ENCODE measurements at regions of chr1 and their contacts with region 1.

Region 1: GRCh38 chr1:149962123-149962548 is 25.5 kb upstream of the MTMR11 start:
- DNase-seq: peak; percentile 57
- ATAC-seq: peak; percentile 84
- H3K4me3 Mint-ChIP-seq: no peak overlapping the region
- H3K27ac Mint-ChIP-seq: no peak overlapping the region
- H3K4me1 Mint-ChIP-seq: peaks cover 9% of the 10 kb centered on the region
- H3K27me3 Mint-ChIP-seq: no peaks in the 10 kb centered on the region
- CTCF ChIP-seq: peak; percentile 90

Region 2: GRCh38 chr1:149877211-149877946 is 84.8 kb before region 1 on chr1:
- CTCF ChIA-PET with region 1: no interaction called
- POLR2A ChIA-PET with region 1: no interaction called
- intact Hi-C with region 1: no loop called
- DNase-seq: no peak
- ATAC-seq: no peak
- H3K4me3 Mint-ChIP-seq: no peak overlapping the region
- H3K27ac Mint-ChIP-seq: no peak overlapping the region
- H3K4me1 Mint-ChIP-seq: peaks cover 28% of the 10 kb centered on the region
- H3K27me3 Mint-ChIP-seq: no peaks in the 10 kb centered on the region
- CTCF ChIP-seq: no peak

Region 3: GRCh38 chr1:150010393-150011115 is 48.4 kb after region 1 on chr1 and contains the start of gene OTUD7B:
- CTCF ChIA-PET with region 1: interaction called, 21 read pairs
- POLR2A ChIA-PET with region 1: no interaction called
- intact Hi-C with region 1: no loop called
- DNase-seq: peak; percentile 80
- ATAC-seq: peak; percentile 84
- H3K4me3 Mint-ChIP-seq: peak within 1 kb of the TSS; percentile 96
- H3K27ac Mint-ChIP-seq: peak within 1 kb of the TSS; percentile 94
- H3K4me1 Mint-ChIP-seq: peaks cover 39% of the 10 kb centered on the region
- H3K27me3 Mint-ChIP-seq: no peaks in the 10 kb centered on the region
- CTCF ChIP-seq: no peak
- total RNA-seq, gene OTUD7B: 16.1 to 17.3 TPM

Region 4: GRCh38 chr1:150049926-150050325 is 87.8 kb after region 1 on chr1:
- CTCF ChIA-PET with region 1: interaction called, 9 read pairs
- POLR2A ChIA-PET with region 1: no interaction called
- intact Hi-C with region 1: loop called (anchors 1 kb)
- DNase-seq: no peak
- ATAC-seq: no peak
- H3K4me3 Mint-ChIP-seq: no peak overlapping the region
- H3K27ac Mint-ChIP-seq: no peak overlapping the region
- H3K4me1 Mint-ChIP-seq: peaks cover 3% of the 10 kb centered on the region
- H3K27me3 Mint-ChIP-seq: peaks cover 5% of the 10 kb centered on the region
- CTCF ChIP-seq: no peak

Region 5: GRCh38 chr1:150162862-150163706 is 200.9 kb after region 1 on chr1:
- CTCF ChIA-PET with region 1: interaction called, 14 read pairs
- POLR2A ChIA-PET with region 1: interaction called, 3 read pairs
- intact Hi-C with region 1: loop called (anchors 5 kb)
- DNase-seq: peak; percentile 63
- ATAC-seq: peak; percentile 57
- H3K4me3 Mint-ChIP-seq: peak overlapping the region; percentile 13
- H3K27ac Mint-ChIP-seq: peak overlapping the region; percentile 25
- H3K4me1 Mint-ChIP-seq: peaks cover 46% of the 10 kb centered on the region
- H3K27me3 Mint-ChIP-seq: no peaks in the 10 kb centered on the region
- CTCF ChIP-seq: no peak

Region 6: DNA sequence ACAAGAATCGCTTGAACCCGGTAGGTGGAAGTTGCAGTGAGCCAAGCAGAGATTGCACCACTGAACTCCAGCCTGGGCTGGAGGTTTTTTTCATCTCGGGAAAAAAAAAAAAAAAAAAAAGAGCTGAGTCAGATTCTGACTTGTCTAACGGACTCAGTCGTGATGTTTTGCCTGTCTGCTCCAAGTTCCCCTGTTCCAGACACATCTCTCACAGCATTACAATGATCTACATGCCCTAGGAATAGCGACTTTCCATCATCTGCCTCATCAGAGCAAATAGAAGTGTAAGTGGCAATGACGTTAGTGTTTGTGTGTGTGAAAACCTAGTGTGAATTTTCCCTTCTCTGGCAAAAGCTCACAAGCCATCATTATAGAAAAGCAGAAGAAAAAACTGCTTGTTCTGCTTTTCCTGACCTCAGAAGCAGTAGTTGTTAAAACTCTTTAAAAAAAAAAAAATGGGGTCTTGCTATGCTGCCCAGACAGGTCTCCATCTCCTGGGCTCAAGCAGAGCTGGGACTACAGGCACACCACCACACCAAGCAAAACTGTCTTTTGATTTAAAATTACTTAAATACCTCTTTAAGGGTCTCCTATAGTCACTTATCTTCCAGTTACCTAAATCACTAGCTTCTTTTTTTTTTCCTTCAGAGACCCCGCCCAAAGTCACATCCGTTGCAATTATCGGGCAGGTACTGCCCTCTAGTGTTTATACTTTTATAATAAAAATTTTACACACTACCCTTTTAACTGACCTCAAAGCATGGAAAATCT is 224.8 kb after region 1 on chr1:
- CTCF ChIA-PET with region 1: interaction called, 19 read pairs
- POLR2A ChIA-PET with region 1: no interaction called
- intact Hi-C with region 1: no loop called
- DNase-seq: peak; percentile 34
- ATAC-seq: peak; percentile 79
- H3K4me3 Mint-ChIP-seq: peak overlapping the region; percentile 44
- H3K27ac Mint-ChIP-seq: peak overlapping the region; percentile 57
- H3K4me1 Mint-ChIP-seq: peaks cover 13% of the 10 kb centered on the region
- H3K27me3 Mint-ChIP-seq: no peaks in the 10 kb centered on the region
- CTCF ChIP-seq: peak; percentile 87

Region 7: GRCh38 chr1:150243003-150243402 is 280.9 kb after region 1 on chr1:
- CTCF ChIA-PET with region 1: no interaction called
- POLR2A ChIA-PET with region 1: no interaction called
- intact Hi-C with region 1: no loop called
- DNase-seq: no peak
- ATAC-seq: no peak
- H3K4me3 Mint-ChIP-seq: no peak overlapping the region
- H3K27ac Mint-ChIP-seq: no peak overlapping the region
- H3K4me1 Mint-ChIP-seq: no peaks in the 10 kb centered on the region
- H3K27me3 Mint-ChIP-seq: peaks cover 2% of the 10 kb centered on the region
- CTCF ChIP-seq: no peak

Measured in activated CD8-positive, alpha-beta T cell treated with anti-CD3 and anti-CD28 coated beads for 36 hours (primary cell).